H1 (cell line): ENCODE measurements at regions of chr1 and their contacts with region 1.

Region 1: DNA sequence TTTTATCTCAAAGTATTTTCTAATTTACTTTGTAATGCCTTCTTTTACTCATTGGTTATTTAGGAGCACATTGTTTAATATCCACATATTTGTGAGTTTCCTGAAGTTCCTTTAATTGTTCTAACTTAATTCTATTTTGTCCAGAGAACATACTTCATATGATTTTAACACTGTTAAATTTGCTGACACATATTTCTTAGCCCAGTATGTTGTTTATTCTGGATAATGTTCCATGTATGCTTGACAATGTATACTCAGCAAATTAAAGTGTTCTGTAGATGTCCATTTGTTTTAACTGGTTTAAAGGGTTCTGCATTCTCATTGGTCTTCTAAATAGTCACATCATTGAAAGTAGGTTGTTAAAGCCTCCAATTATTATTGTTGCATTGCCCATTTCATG is 643.7 kb upstream of the NR5A2 start:
- DNase-seq: no peak
- H3K4me3 ChIP-seq: no peak overlapping the region
- H3K27ac ChIP-seq: no peak overlapping the region
- H3K4me1 ChIP-seq: no peaks in the 10 kb centered on the region
- H3K27me3 ChIP-seq: no peaks in the 10 kb centered on the region
- CTCF ChIP-seq: no peak
- EP300 ChIP-seq: no peak
- POLR2A ChIP-seq: no peak
- RAD21 ChIP-seq: no peak

Region 2: GRCh38 chr1:199336745-199337640 is 46.8 kb before region 1 on chr1:
- CTCF ChIA-PET with region 1: no interaction called
- POLR2A ChIA-PET with region 1: no interaction called
- DNase-seq: peak; percentile 13 to 46
- H3K4me3 ChIP-seq: no peak overlapping the region
- H3K27ac ChIP-seq: no peak overlapping the region
- H3K4me1 ChIP-seq: no peaks in the 10 kb centered on the region
- H3K27me3 ChIP-seq: no peaks in the 10 kb centered on the region
- CTCF ChIP-seq: peak; percentile 58 to 96 (median 65)
- EP300 ChIP-seq: no peak
- POLR2A ChIP-seq: no peak
- RAD21 ChIP-seq: peak; percentile 53 to 66

Region 3: GRCh38 chr1:199373139-199373538 is 10.7 kb before region 1 on chr1:
- CTCF ChIA-PET with region 1: no interaction called
- POLR2A ChIA-PET with region 1: no interaction called
- DNase-seq: no peak
- H3K4me3 ChIP-seq: no peak overlapping the region
- H3K27ac ChIP-seq: no peak overlapping the region
- H3K4me1 ChIP-seq: no peaks in the 10 kb centered on the region
- H3K27me3 ChIP-seq: no peaks in the 10 kb centered on the region
- CTCF ChIP-seq: no peak
- EP300 ChIP-seq: no peak
- POLR2A ChIP-seq: no peak
- RAD21 ChIP-seq: no peak

Region 4: DNA sequence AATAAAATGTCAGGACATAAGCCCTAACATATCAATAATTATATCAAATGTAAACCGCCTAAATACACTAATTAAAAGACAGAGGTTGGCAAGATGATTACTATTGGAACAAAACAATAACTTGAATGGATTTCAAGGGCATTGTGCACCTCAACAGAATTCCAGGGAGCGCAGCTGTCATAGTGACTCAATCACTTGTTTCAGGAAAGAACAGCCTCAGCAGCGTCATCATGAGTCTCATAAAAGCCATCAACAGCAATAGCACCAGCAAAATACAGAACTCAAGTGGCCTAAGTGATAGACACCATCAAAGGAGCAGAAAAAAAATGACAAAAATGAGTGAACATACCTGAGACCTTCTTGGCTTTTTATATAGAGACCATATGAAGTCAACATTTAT is 11.1 kb after region 1 on chr1:
- CTCF ChIA-PET with region 1: no interaction called
- POLR2A ChIA-PET with region 1: no interaction called
- DNase-seq: no peak
- H3K4me3 ChIP-seq: no peak overlapping the region
- H3K27ac ChIP-seq: no peak overlapping the region
- H3K4me1 ChIP-seq: no peaks in the 10 kb centered on the region
- H3K27me3 ChIP-seq: no peaks in the 10 kb centered on the region
- CTCF ChIP-seq: no peak
- EP300 ChIP-seq: no peak
- POLR2A ChIP-seq: no peak
- RAD21 ChIP-seq: no peak

Region 5: GRCh38 chr1:199405634-199406196 is 21.9 kb after region 1 on chr1:
- CTCF ChIA-PET with region 1: interaction called, 11 read pairs
- POLR2A ChIA-PET with region 1: no interaction called
- DNase-seq: no peak
- H3K4me3 ChIP-seq: no peak overlapping the region
- H3K27ac ChIP-seq: no peak overlapping the region
- H3K4me1 ChIP-seq: peaks cover 0 to 5% (median 0%) of the 10 kb centered on the region in 4 experiments; a peak in 1 of 7 replicates
- H3K27me3 ChIP-seq: peaks cover 0 to 1% (median 0%) of the 10 kb centered on the region in 4 experiments; a peak in 1 of 7 replicates
- CTCF ChIP-seq: no peak
- EP300 ChIP-seq: no peak
- POLR2A ChIP-seq: no peak
- RAD21 ChIP-seq: no peak